Activated CD4-positive, alpha-beta T cell treated with anti-CD3 and anti-CD28 coated beads, Interleukin-2, amount 10 ng/mL, durations not matched to agents 7 days and 5 days (primary cell): ENCODE measurements at regions of chr10 and their contacts with region 1.

Region 1: GRCh38 chr10:97400665-97401454 is at the start of gene RRP12:
- DNase-seq: peak; percentile 96
- H3K4me3 Mint-ChIP-seq: peak within 1 kb of the TSS; percentile 93
- H3K27ac Mint-ChIP-seq: peak within 1 kb of the TSS; percentile 93
- H3K4me1 Mint-ChIP-seq: peaks cover 16% of the 10 kb centered on the region
- H3K27me3 Mint-ChIP-seq: no peaks in the 10 kb centered on the region
- total RNA-seq, gene RRP12: 20.1 to 21.6 TPM

Region 2: DNA sequence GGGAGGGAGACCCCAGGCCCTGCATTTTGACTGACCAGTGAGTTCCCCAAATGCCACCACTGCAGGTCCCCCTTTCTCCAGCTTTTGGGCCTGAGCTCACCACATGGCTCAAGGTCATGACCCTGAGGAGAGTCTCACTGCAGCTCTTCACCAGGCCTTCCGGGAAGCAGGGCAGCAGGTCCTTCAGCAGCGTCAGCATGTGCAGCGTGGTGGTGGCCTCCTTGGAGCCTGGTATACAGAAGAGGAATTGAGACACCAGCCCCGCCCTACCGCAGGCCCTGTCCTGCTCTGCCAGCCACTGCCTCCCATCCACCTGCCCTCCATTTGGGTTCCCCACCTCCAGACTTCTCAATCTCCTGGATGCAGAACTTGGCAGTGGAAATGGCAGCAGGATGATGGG is 12.7 kb before region 1 on chr10:
- CTCF ChIA-PET with region 1: interaction called, 10 read pairs
- POLR2A ChIA-PET with region 1: no interaction called
- DNase-seq: no peak
- H3K4me3 Mint-ChIP-seq: no peak overlapping the region
- H3K27ac Mint-ChIP-seq: no peak overlapping the region
- H3K4me1 Mint-ChIP-seq: peaks cover 2% of the 10 kb centered on the region
- H3K27me3 Mint-ChIP-seq: no peaks in the 10 kb centered on the region